ENCODE measurements at regions of chr11 and their contacts with region 1.

Region 1: DNA sequence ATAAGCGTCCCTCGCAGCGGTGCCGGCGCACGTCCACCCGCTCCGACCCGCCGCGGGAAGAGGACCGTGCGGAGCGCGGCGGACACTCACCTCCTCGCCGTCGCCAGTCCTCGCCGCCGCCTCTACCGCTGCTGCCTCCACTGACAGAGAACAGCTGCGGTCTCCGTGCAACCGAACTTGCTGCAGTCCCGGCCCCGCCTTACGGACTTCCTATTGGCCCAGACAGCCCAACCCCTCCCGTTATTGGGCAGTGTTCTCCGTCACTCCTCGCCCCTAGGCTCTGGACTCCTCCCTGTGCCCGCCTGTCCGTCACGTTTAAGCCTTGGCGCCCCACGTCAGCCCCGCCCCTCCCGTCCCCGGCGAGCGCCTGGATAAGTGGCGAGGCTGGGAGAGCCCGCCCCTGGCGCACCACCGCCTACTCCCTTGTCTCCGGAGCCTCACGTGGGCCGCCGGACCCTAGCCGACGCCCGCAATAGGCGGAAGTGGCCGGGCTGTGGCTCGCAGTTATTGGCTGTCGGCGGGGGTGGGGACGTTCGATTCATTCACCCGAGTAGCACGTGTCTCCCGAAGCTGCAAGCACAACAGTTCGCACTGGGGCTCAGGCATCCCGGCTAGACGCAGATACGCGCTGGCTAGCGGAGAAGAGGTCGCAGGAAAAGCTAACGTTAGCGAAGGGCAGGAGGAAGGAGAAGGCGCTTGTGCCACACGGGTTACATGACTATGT is at the start of gene PC:
- DNase-seq: peak; percentile 99 to 100
- H3K4me3 ChIP-seq: peak within 1 kb of the TSS; percentile 61 to 92
- H3K27ac ChIP-seq: peak within 1 kb of the TSS; percentile 77 to 80
- H3K4me1 ChIP-seq: peaks cover 0 to 15% of the 10 kb centered on the region in 2 donors
- H3K27me3 ChIP-seq: no peaks in the 10 kb centered on the region
- CTCF ChIP-seq: no peak
- total RNA-seq, gene PC: 13.5 TPM

Region 2: GRCh38 chr11:66855574-66856495 is 102.6 kb before region 1 on chr11:
- intact Hi-C with region 1: loop called (anchors 5 kb)
- DNase-seq: peak; percentile 78 to 96
- H3K4me3 ChIP-seq: peak overlapping the region; percentile 64 to 85
- H3K27ac ChIP-seq: peak overlapping the region; percentile 75 to 92
- H3K4me1 ChIP-seq: peaks cover 4 to 6% of the 10 kb centered on the region in 2 donors
- H3K27me3 ChIP-seq: no peaks in the 10 kb centered on the region
- CTCF ChIP-seq: no peak

Region 3: GRCh38 chr11:67022328-67022927 is 64.0 kb after region 1 on chr11:
- intact Hi-C with region 1: loop called (anchors 2 kb)
- DNase-seq: peak in 1 of 2 donors; percentile 76
- H3K4me3 ChIP-seq: peak overlapping the region; percentile 53 to 75
- H3K27ac ChIP-seq: peak overlapping the region in 1 of 2 donors; percentile 40
- H3K4me1 ChIP-seq: peaks cover 8 to 13% of the 10 kb centered on the region in 2 donors
- H3K27me3 ChIP-seq: no peaks in the 10 kb centered on the region
- CTCF ChIP-seq: no peak

Region 4: GRCh38 chr11:67053896-67054842 is 95.8 kb after region 1 on chr11:
- intact Hi-C with region 1: loop called (anchors 1 kb)
- DNase-seq: peak; percentile 44 to 82
- H3K4me3 ChIP-seq: no peak overlapping the region
- H3K27ac ChIP-seq: peak overlapping the region; percentile 81 to 89
- H3K4me1 ChIP-seq: peaks cover 11 to 27% of the 10 kb centered on the region in 2 donors
- H3K27me3 ChIP-seq: no peaks in the 10 kb centered on the region
- CTCF ChIP-seq: peak; percentile 35 to 74 (median 59)

Region 5: GRCh38 chr11:67277231-67277961 is 319.0 kb after region 1 on chr11:
- intact Hi-C with region 1: no loop called
- DNase-seq: peak; percentile 79 to 95
- H3K4me3 ChIP-seq: peak overlapping the region; percentile 24 to 46
- H3K27ac ChIP-seq: peak overlapping the region; percentile 72 to 80
- H3K4me1 ChIP-seq: peaks cover 42 to 52% of the 10 kb centered on the region in 2 donors
- H3K27me3 ChIP-seq: no peaks in the 10 kb centered on the region
- CTCF ChIP-seq: no peak

Region 6: GRCh38 chr11:68460741-68461574 is 1502.6 kb after region 1 on chr11 and contains the start of gene PPP6R3:
- intact Hi-C with region 1: no loop called
- DNase-seq: no peak
- H3K4me3 ChIP-seq: peak within 1 kb of the TSS; percentile 71 to 74
- H3K27ac ChIP-seq: peak within 1 kb of the TSS; percentile 92
- H3K4me1 ChIP-seq: peaks cover 6 to 30% of the 10 kb centered on the region in 2 donors
- H3K27me3 ChIP-seq: no peaks in the 10 kb centered on the region
- CTCF ChIP-seq: no peak
- total RNA-seq, gene PPP6R3: 94.7 TPM